Breast epithelium (tissue), 4 donors: ENCODE measurements at regions of chr6 and their contacts with region 1.

Region 1: GRCh38 chr6:53484476-53485280 is 60.2 kb downstream of the GCLC start:
- DNase-seq: peak in 1 of 2 donors; percentile 51
- H3K4me3 ChIP-seq: no peak overlapping the region
- H3K27ac ChIP-seq: no peak overlapping the region
- H3K4me1 ChIP-seq: peaks cover 0 to 6% of the 10 kb centered on the region in 2 donors
- H3K27me3 ChIP-seq: no peaks in the 10 kb centered on the region
- CTCF ChIP-seq: peak; percentile 90 to 95 (median 95)
- POLR2A ChIP-seq: no peak

Region 2: DNA sequence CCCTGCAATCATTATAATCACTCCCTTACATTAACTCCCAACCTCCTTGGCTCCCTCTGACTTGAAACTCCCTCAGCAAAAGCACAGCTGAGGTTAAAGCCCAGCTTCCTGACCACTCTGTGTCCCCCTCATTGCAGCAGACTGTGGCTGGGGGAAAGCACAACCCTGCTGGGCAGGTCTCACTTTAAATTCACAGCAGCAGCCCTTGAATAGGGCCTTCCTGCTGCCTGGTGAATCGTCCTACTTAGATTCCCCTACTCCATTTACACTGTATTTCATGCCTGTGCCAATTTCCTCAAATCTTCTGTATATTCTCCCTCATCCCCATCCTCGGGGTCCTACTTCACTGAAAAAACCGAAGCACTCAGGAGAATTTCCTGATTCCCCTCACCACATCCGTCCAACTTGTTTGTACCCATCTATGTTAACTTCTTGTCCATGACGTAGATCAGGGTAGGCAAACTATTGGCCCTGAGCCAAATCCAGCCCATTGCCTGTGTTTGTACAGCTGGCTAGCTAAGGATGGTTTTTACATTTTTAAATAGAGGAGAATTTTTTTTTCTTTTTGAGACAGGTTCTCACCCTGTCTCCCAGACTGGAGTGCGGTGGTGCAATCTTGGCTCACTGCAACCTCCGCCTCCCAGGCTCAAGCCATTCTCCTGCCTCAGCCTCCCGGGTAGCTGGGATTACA is 304.6 kb before region 1 on chr6:
- intact Hi-C with region 1: loop called (anchors 5 kb)
- DNase-seq: peak; percentile 50 to 75
- H3K4me3 ChIP-seq: no peak overlapping the region
- H3K27ac ChIP-seq: peak overlapping the region in 1 of 2 donors; percentile 41
- H3K4me1 ChIP-seq: no peaks in the 10 kb centered on the region
- H3K27me3 ChIP-seq: no peaks in the 10 kb centered on the region
- CTCF ChIP-seq: no peak
- POLR2A ChIP-seq: no peak

Region 3: GRCh38 chr6:53375847-53376246 is 108.8 kb before region 1 on chr6:
- intact Hi-C with region 1: loop called (anchors 10 kb)
- DNase-seq: no peak
- H3K4me3 ChIP-seq: no peak overlapping the region
- H3K27ac ChIP-seq: no peak overlapping the region
- H3K4me1 ChIP-seq: no peaks in the 10 kb centered on the region
- H3K27me3 ChIP-seq: no peaks in the 10 kb centered on the region
- CTCF ChIP-seq: no peak
- POLR2A ChIP-seq: no peak